PC-3 (cell line): ENCODE measurements at regions of chr1 and their contacts with region 1.

Region 1: GRCh38 chr1:67685067-67685557 is at the start of gene GADD45A:
- DNase-seq: peak; percentile 99
- ATAC-seq: peak; percentile 74
- H3K4me3 ChIP-seq: peak within 1 kb of the TSS; percentile 87
- H3K27ac ChIP-seq: peak within 1 kb of the TSS; percentile 93
- H3K4me1 ChIP-seq: peaks cover 53% of the 10 kb centered on the region
- H3K27me3 ChIP-seq: no peaks in the 10 kb centered on the region
- CTCF ChIP-seq: no peak
- total RNA-seq, gene GADD45A: 129 and 153 TPM in 2 replicates

Region 2: GRCh38 chr1:67535474-67535873 is 149.6 kb before region 1 on chr1:
- CTCF ChIA-PET with region 1: interaction called, 5 read pairs
- POLR2A ChIA-PET with region 1: interaction called, 6 read pairs
- intact Hi-C with region 1: loop called (anchors 1 kb)
- DNase-seq: peak; percentile 87
- ATAC-seq: peak; percentile 83
- H3K4me3 ChIP-seq: no peak overlapping the region
- H3K27ac ChIP-seq: no peak overlapping the region
- H3K4me1 ChIP-seq: peaks cover 15% of the 10 kb centered on the region
- H3K27me3 ChIP-seq: no peaks in the 10 kb centered on the region
- CTCF ChIP-seq: peak; percentile 98

Region 3: DNA sequence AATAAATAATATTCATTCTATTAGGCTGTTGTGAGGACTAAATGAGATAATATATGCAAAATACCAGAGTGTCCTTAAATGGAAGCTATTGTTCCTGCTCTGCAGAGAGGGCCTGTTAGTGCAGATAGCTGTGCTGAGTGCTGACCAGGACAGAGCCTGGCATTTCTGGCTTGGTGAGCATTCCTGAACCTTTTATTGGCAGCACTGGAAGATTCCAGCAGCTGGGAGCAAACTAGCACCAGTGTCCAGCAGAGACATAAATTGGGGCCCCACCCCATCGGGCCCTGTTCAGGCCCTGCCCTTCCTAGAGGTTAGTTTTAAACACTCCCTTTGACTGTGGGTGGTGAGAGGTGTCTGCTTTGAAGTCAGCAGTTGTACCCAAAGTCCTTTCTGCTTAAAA is 86.0 kb before region 1 on chr1:
- CTCF ChIA-PET with region 1: no interaction called
- POLR2A ChIA-PET with region 1: interaction called, 25 read pairs
- intact Hi-C with region 1: no loop called
- DNase-seq: no peak
- ATAC-seq: peak; percentile 29; the same call in 1 of the 2 replicates
- H3K4me3 ChIP-seq: no peak overlapping the region
- H3K27ac ChIP-seq: no peak overlapping the region
- H3K4me1 ChIP-seq: no peaks in the 10 kb centered on the region
- H3K27me3 ChIP-seq: no peaks in the 10 kb centered on the region
- CTCF ChIP-seq: no peak

Region 4: GRCh38 chr1:67710417-67710816 is 25.3 kb after region 1 on chr1:
- CTCF ChIA-PET with region 1: no interaction called
- POLR2A ChIA-PET with region 1: interaction called, 34 read pairs
- intact Hi-C with region 1: loop called (anchors 2 kb)
- DNase-seq: peak; percentile 65
- ATAC-seq: peak; percentile 26
- H3K4me3 ChIP-seq: no peak overlapping the region
- H3K27ac ChIP-seq: peak overlapping the region; percentile 32
- H3K4me1 ChIP-seq: peaks cover 54% of the 10 kb centered on the region
- H3K27me3 ChIP-seq: no peaks in the 10 kb centered on the region
- CTCF ChIP-seq: no peak

Region 5: GRCh38 chr1:67735806-67736627 is 50.9 kb after region 1 on chr1:
- CTCF ChIA-PET with region 1: no interaction called
- POLR2A ChIA-PET with region 1: no interaction called
- intact Hi-C with region 1: no loop called
- DNase-seq: peak; percentile 61
- ATAC-seq: peak; percentile 86
- H3K4me3 ChIP-seq: no peak overlapping the region
- H3K27ac ChIP-seq: peak overlapping the region; percentile 42
- H3K4me1 ChIP-seq: peaks cover 14% of the 10 kb centered on the region
- H3K27me3 ChIP-seq: no peaks in the 10 kb centered on the region
- CTCF ChIP-seq: no peak

Region 6: GRCh38 chr1:67760030-67760821 is 75.1 kb after region 1 on chr1:
- CTCF ChIA-PET with region 1: interaction called, 26 read pairs
- POLR2A ChIA-PET with region 1: interaction called, 20 read pairs
- intact Hi-C with region 1: loop called (anchors 1 kb)
- DNase-seq: peak; percentile 85
- ATAC-seq: peak; percentile 82
- H3K4me3 ChIP-seq: peak overlapping the region; percentile 9; the same call in 1 of the 2 replicates
- H3K27ac ChIP-seq: peak overlapping the region; percentile 45
- H3K4me1 ChIP-seq: peaks cover 32% of the 10 kb centered on the region
- H3K27me3 ChIP-seq: no peaks in the 10 kb centered on the region
- CTCF ChIP-seq: peak; percentile 88

Region 7: GRCh38 chr1:68384321-68384813 is 699.3 kb after region 1 on chr1:
- CTCF ChIA-PET with region 1: no interaction called
- POLR2A ChIA-PET with region 1: no interaction called
- intact Hi-C with region 1: loop called (anchors 10 kb)
- DNase-seq: peak; percentile 98
- ATAC-seq: peak; percentile 76
- H3K4me3 ChIP-seq: peak overlapping the region; percentile 60
- H3K27ac ChIP-seq: peak overlapping the region; percentile 100
- H3K4me1 ChIP-seq: peaks cover 40% of the 10 kb centered on the region
- H3K27me3 ChIP-seq: no peaks in the 10 kb centered on the region
- CTCF ChIP-seq: peak; percentile 68